Activated T-helper 1 cell treated with anti-CD3 and anti-CD28 coated beads, Interleukin-12 subunit alpha, Interleukin-12 subunit beta, Interleukin-2, Interleukin-4 antibody, amounts not matched to agents 30 ng/mL and 10 ng/mL and 1 ng/mL, durations not matched to agents 14 hours and 24 hours and 36 hours (primary cell): ENCODE measurements at regions of chr1 and their contacts with region 1.

Region 1: GRCh38 chr1:99180343-99180808 is 83.9 kb upstream of the PLPPR4 start:
- DNase-seq: peak; percentile 31
- H3K4me3 Mint-ChIP-seq: no peak overlapping the region
- H3K27ac Mint-ChIP-seq: no peak overlapping the region
- H3K4me1 Mint-ChIP-seq: no peaks in the 10 kb centered on the region
- H3K27me3 Mint-ChIP-seq: peaks cover 1% of the 10 kb centered on the region

Region 2: GRCh38 chr1:99457381-99458165 is 277.2 kb after region 1 on chr1:
- intact Hi-C with region 1: no loop called
- DNase-seq: no peak
- H3K4me3 Mint-ChIP-seq: no peak overlapping the region
- H3K27ac Mint-ChIP-seq: no peak overlapping the region
- H3K4me1 Mint-ChIP-seq: no peaks in the 10 kb centered on the region
- H3K27me3 Mint-ChIP-seq: peaks cover 6% of the 10 kb centered on the region

Region 3: DNA sequence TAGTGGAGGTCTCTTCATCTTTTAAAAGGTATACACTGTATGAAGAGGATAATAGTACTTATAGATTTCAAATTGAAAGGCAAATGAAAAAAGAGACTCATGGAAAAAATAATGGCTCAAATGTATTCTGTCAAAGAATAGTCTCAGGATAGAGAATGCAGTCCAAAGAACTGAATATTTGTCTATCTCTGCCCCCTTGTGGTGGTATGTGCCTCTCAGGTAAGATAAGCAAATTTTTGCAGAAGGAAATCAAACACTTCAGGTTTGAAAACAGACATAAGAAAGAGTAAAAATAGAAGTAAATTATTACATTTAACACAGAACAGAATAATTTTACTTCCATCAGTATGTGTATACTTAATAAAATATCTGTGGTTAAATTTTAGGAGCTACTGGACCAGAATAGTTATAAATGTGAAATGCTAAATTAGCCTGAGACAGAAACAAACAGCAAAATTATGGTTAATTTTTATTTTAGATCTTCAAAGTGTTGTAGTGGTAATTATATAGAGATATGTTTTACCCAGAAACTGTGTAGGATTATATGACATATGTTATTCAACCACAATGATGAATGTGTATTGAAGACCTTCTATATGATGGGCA is 301.1 kb after region 1 on chr1:
- intact Hi-C with region 1: loop called (anchors 1 kb)
- DNase-seq: no peak
- H3K4me3 Mint-ChIP-seq: no peak overlapping the region
- H3K27ac Mint-ChIP-seq: no peak overlapping the region
- H3K4me1 Mint-ChIP-seq: no peaks in the 10 kb centered on the region
- H3K27me3 Mint-ChIP-seq: peaks cover 8% of the 10 kb centered on the region

Region 4: GRCh38 chr1:99685516-99686180 is 505.3 kb after region 1 on chr1:
- intact Hi-C with region 1: loop called (anchors 5 kb)
- DNase-seq: no peak
- H3K4me3 Mint-ChIP-seq: no peak overlapping the region
- H3K27ac Mint-ChIP-seq: no peak overlapping the region
- H3K4me1 Mint-ChIP-seq: no peaks in the 10 kb centered on the region
- H3K27me3 Mint-ChIP-seq: peaks cover 1% of the 10 kb centered on the region

Region 5: DNA sequence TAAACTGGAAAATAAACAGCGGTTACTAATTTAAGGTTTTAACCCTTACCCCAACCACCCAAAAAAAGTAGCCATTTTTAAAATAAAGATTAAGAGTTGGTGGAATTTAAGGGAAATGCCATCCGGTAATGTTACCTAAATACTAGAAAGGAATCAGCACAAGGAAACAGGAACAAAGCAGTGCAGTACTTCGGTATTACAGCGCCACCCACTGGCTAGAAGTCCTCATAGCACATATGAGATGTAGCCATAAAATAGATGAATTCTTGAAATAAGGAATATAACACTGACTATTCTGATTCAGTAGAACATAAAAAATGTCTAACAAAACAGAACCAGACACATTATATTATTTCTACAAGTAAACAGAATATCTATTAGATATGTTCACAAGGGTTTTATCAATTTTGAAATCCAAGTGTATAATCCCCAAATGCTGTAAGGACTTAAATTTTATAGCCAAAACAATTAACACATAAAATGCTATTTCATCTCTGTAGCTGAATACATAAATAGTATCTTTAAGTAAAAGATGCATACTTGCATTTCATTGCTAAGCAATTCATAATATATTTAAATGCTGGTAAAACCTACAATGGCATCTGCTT is 527.3 kb after region 1 on chr1:
- intact Hi-C with region 1: loop called (anchors 1 kb)
- DNase-seq: peak; percentile 16
- H3K4me3 Mint-ChIP-seq: no peak overlapping the region
- H3K27ac Mint-ChIP-seq: no peak overlapping the region
- H3K4me1 Mint-ChIP-seq: peaks cover 16% of the 10 kb centered on the region
- H3K27me3 Mint-ChIP-seq: peaks cover 2% of the 10 kb centered on the region

Region 6: GRCh38 chr1:100866041-100866900 is 1685.9 kb after region 1 on chr1:
- intact Hi-C with region 1: loop called (anchors 5 kb)
- DNase-seq: no peak
- H3K4me3 Mint-ChIP-seq: no peak overlapping the region
- H3K27ac Mint-ChIP-seq: no peak overlapping the region
- H3K4me1 Mint-ChIP-seq: no peaks in the 10 kb centered on the region
- H3K27me3 Mint-ChIP-seq: no peaks in the 10 kb centered on the region